Activated CD4-positive, alpha-beta T cell treated with anti-CD3 and anti-CD28 coated beads for 36 hours (primary cell): ENCODE measurements at regions of chr13 and their contacts with region 1.

Region 1: DNA sequence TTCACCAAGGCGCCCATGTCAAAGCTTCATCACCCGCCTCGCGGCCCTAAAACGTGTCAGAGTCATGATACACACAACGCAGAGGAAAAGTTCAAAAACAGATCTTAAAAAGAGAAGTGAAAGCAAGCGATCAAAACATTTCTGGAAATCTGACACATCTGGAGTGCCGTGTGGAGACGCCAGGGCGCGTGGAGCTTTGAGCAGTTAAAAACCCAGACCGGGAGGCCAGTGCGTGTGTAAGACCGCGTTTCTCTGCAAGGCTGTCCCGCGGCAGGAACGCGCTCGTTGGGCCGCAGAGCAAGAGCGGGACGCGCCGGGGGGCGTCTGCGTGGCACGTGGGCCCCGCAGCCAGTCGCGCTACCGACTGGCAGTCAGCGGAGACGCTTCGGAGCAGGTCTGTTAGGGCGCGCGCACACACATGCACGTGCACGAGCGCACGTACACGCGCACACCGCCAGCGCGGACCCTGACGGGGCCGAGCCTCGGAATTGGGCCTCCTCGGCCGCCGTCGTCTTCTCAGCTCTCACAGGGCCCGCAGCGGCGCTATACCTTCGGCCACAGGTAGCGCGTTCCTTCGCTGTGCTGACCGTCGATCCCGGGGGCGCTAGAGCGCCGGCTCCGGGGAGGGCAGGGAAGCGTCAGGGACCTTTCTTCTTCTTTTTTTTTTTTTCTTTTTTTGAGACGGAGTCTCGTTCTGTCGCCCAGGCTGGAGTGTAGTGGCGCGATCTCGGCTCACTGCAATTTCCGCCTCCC is 35.8 kb downstream of the RNF6 start:
- DNase-seq: peak; percentile 95
- ATAC-seq: peak; percentile 83
- H3K4me3 Mint-ChIP-seq: peak overlapping the region; percentile 82
- H3K27ac Mint-ChIP-seq: peak overlapping the region; percentile 96
- H3K4me1 Mint-ChIP-seq: peaks cover 29% of the 10 kb centered on the region
- H3K27me3 Mint-ChIP-seq: no peaks in the 10 kb centered on the region

Region 2: DNA sequence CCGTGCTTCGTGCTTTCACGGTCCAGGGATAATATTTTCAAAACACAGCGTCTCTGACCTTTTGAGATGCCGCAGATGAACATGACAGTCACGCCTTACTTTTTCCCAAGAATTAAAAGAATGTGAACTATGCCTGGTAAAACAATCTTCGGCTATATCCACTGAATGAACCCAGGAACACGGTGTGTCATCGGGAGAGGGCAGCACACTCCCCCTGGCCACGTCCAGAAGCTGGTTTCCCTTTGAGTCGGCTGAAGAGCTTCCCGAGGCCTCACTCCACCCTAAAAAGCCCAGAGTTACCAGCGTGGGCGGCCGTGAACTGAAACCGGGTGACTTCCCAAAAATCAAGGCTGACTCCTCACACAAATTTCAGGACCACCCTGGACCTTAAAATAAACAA is 111.6 kb before region 1 on chr13:
- CTCF ChIA-PET with region 1: no interaction called
- POLR2A ChIA-PET with region 1: no interaction called
- intact Hi-C with region 1: no loop called
- DNase-seq: no peak
- ATAC-seq: no peak
- H3K4me3 Mint-ChIP-seq: no peak overlapping the region
- H3K27ac Mint-ChIP-seq: no peak overlapping the region
- H3K4me1 Mint-ChIP-seq: no peaks in the 10 kb centered on the region
- H3K27me3 Mint-ChIP-seq: peaks cover 16% of the 10 kb centered on the region

Region 3: DNA sequence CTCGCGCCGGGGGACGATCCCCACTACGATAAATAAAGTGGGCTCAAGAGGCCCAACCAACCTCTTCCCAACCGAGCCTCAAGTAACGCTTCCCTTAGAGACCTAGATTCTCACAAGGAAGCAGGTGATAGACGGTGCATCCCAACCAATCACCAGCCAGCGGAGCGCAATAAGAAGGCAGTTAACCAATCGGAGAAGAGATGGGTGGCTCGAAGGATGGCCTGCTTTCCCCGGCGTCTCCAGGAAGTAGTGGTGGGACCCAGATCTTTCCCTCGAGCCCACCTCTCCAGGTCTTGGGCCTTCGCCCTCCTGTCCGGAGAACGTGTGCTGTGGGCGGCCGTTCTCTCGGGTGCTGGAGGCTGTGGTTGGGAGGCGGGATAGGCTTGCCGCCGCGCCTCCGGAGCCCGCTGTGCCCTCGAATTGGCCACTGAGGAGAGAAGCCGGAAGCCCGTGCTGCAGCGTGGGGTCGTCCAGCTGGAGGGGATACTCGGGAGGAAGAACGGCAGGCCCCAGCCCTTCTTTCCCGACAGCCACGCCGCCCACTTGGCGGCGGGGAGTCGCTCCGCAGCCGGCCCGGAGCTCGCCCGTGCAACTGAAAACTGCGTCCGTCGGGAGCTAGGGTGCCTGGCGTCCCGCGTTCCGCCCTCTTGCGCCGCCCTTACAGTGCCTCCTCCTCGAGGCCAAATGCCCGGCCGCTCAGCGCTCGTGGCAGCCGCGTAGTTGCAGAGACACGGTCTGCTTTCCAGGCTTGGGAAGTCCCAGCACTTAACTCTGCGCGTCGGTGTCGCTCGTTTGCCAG is 35.6 kb after region 1 on chr13 and contains the start of gene RNF6:
- CTCF ChIA-PET with region 1: interaction called, 13 read pairs
- POLR2A ChIA-PET with region 1: interaction called, 4 read pairs
- intact Hi-C with region 1: loop called (anchors 1 kb)
- DNase-seq: peak; percentile 90
- ATAC-seq: peak; percentile 98
- H3K4me3 Mint-ChIP-seq: peak within 1 kb of the TSS; percentile 100
- H3K27ac Mint-ChIP-seq: peak within 1 kb of the TSS; percentile 100
- H3K4me1 Mint-ChIP-seq: peaks cover 33% of the 10 kb centered on the region
- H3K27me3 Mint-ChIP-seq: no peaks in the 10 kb centered on the region
- total RNA-seq, gene RNF6: 37.0 to 42.4 TPM

Region 4: DNA sequence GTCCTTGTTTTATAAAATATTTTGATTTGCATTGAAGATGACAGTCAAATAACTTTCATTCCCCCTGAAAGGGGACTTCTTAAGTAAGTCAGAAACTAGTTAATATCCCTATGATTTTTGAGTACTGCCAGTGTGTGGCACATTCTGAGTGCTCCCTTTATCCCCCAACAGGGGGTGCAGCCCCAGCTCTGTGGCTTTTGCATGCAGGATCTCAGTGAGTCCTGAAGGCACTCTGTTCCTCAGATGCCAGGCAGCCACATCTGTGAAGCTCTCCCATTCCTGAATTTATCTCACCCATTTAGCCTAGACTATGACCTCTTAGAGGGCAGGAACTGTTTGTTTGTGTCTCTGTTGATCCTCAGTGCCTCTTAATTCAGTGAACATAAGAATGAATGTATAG is 190.7 kb after region 1 on chr13:
- CTCF ChIA-PET with region 1: interaction called, 4 read pairs
- POLR2A ChIA-PET with region 1: no interaction called
- intact Hi-C with region 1: loop called (anchors 5 to 10 kb)
- DNase-seq: peak; percentile 34
- ATAC-seq: no peak
- H3K4me3 Mint-ChIP-seq: no peak overlapping the region
- H3K27ac Mint-ChIP-seq: no peak overlapping the region
- H3K4me1 Mint-ChIP-seq: peaks cover 11% of the 10 kb centered on the region
- H3K27me3 Mint-ChIP-seq: no peaks in the 10 kb centered on the region

Region 5: DNA sequence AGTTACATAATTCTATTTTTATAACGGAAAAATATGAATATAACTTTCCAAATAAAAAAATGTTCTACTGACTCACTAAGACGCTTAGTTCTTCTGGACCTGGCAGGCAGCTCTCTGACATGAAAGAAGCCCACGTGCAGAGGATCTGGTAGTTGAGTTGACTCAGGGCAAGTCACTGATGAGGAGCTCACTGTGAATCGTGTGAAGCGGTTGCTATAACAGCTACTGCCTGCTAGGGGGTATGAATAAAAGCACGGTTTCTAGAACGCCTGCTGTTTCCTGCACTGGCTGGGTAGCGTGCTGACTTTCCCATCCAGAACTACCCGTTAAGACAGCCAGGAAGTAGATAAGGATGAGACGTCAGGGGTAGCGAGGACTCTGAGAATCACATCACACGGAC is 316.5 kb after region 1 on chr13:
- CTCF ChIA-PET with region 1: interaction called, 65 read pairs
- POLR2A ChIA-PET with region 1: interaction called, 4 read pairs
- intact Hi-C with region 1: no loop called
- DNase-seq: peak; percentile 74
- ATAC-seq: peak; percentile 99
- H3K4me3 Mint-ChIP-seq: no peak overlapping the region
- H3K27ac Mint-ChIP-seq: no peak overlapping the region
- H3K4me1 Mint-ChIP-seq: peaks cover 22% of the 10 kb centered on the region
- H3K27me3 Mint-ChIP-seq: no peaks in the 10 kb centered on the region

Region 6: DNA sequence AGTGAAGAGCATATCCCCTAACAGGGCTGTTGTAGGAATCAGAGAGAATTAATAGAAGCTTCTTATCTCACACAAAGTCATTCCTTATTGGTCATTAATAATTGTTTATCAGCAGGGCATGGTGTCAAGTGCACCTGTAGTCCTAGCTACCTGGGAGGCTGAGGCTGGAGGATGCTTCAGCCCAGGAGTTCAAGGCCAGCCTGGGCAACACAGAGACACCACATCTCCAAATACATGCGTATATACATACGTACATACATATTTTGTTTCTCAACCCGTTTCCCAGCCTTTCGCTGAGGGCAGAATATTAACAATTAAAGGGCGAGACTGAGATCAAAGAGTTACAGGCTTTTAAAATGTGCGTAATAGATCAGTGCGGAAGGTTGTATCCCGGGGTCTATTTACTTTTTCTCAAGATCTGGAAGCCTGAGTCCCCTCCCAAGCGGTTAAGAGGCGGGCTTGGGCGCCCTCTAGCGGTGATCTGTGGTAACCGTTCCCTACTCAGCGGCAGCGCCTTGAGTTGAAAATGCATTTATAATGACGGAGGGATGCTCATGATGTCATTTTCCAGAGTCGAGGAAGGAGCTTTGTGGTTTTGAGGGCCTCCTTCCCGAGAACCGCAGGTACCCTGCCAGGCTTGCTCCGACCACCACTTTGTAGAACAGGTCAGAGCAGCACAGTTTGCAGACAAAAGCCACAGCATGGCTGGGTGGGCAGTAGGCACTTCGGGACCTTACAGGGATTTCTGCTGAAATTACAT is 743.9 kb after region 1 on chr13:
- CTCF ChIA-PET with region 1: no interaction called
- POLR2A ChIA-PET with region 1: no interaction called
- intact Hi-C with region 1: loop called in 1 of 2 experiments (anchors 10 kb)
- DNase-seq: peak; percentile 85
- ATAC-seq: peak; percentile 72
- H3K4me3 Mint-ChIP-seq: no peak overlapping the region
- H3K27ac Mint-ChIP-seq: no peak overlapping the region
- H3K4me1 Mint-ChIP-seq: no peaks in the 10 kb centered on the region
- H3K27me3 Mint-ChIP-seq: peaks cover 3% of the 10 kb centered on the region